ENCODE measurements at regions of chr3 and their contacts with region 1.

Region 1: DNA sequence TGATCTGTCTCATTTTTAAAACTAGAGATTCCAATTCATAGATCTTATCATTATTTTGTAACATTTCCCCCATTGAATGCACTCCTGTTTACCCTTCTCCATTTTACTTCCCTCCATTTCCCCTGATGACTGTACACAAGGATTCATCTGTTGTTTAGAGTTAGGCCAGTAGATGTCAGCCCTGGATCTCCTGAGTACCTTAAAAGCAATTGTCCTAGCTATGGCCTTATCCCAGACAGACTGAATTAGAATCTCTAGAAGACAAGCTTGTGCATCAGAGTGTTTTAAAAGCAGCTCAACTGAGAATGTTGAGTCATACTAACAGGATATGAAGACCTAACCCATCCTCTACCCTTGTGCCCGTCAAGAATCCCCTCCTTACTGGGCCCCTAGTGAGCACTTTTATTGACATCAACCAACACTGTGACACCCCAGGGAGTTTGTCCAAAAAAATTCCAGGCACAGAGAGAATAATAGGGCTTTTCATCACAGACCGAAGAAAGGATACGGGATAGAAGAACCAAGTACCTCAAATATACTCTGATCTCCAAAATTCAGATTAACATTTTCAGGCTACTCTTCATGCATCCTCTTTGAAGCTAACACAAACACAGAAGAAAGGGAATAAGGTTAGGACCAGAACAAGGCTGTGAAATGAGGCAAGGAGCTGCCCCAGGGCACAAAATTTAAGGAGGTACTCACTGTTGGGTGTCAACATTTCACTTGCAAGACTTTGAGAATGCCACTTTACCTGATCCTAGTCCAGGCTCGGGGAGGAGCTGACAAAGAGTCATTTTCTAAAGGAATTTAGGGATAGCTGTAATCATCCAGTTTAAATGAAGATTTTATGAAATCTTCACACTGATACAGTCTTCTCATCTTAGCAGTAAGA is 17.1 kb downstream of the ZBED2 start:
- DNase-seq: peak; percentile 70
- H3K4me3 ChIP-seq: no peak overlapping the region
- H3K27ac ChIP-seq: no peak overlapping the region
- H3K27me3 ChIP-seq: no peaks in the 10 kb centered on the region
- CTCF ChIP-seq: peak; percentile 80

Region 2: DNA sequence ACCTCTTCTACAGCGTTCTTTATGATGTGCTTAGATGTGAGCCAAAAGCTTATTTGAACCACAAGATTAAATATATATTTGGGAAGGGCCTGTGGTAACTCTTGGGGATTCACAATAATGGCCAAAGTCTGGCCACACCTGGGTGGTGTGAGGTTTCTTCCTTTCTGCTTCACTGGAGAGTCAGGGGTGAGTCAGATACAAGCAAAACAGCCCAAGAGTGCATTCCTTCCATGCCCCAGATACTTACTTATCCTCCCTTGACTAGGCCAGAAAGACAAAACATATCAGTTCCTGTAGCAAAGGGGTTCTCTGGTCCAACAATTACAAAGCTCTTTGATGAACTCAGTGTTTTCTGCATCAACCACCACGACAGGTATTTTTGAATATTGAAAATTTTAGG is 16.2 kb after region 1 on chr3:
- CTCF ChIA-PET with region 1: interaction called, 20 read pairs
- POLR2A ChIA-PET with region 1: no interaction called
- DNase-seq: peak; percentile 72
- H3K4me3 ChIP-seq: no peak overlapping the region
- H3K27ac ChIP-seq: peak overlapping the region; percentile 65
- H3K27me3 ChIP-seq: no peaks in the 10 kb centered on the region
- CTCF ChIP-seq: no peak

Region 3: DNA sequence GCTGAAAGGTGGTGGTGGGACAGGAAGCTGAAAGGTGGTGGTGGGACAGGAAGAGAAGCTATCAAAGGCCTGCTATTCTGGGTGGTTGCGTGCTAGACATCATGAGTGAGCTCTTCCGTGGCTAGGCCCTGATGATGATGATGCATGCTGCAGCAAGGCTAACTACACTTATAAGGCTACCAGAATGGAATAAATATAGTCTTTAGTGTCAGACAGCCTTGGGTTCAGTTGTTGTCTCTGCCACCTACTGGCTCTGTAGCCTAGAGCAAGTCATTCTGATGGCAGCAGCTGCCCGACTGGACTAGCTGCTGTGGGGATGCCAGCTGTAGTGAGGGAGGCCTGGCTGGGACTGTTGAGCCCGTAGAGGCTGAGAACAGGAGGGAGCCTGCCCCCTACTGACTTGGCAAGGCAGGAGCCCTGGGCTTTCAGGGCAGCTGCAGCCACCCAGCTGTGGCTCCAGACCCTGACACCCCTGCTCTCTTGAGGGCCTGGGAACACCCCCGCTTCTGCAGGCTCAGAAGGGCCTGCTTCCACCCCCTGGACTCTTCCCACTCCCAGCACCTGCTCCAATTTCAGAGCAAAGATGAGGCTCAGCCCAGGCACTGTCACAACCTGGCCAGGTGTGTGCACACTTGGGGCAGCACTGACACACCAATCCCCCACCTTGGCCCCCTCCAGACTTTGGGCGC is 38.5 kb after region 1 on chr3:
- CTCF ChIA-PET with region 1: interaction called, 16 read pairs
- POLR2A ChIA-PET with region 1: no interaction called
- DNase-seq: no peak
- H3K4me3 ChIP-seq: no peak overlapping the region
- H3K27ac ChIP-seq: no peak overlapping the region
- H3K27me3 ChIP-seq: no peaks in the 10 kb centered on the region
- CTCF ChIP-seq: no peak

Region 4: GRCh38 chr3:111668912-111669488 is 91.0 kb after region 1 on chr3:
- CTCF ChIA-PET with region 1: interaction called, 34 read pairs
- POLR2A ChIA-PET with region 1: no interaction called
- DNase-seq: peak; percentile 37
- H3K4me3 ChIP-seq: no peak overlapping the region
- H3K27ac ChIP-seq: no peak overlapping the region
- H3K27me3 ChIP-seq: no peaks in the 10 kb centered on the region
- CTCF ChIP-seq: peak; percentile 76

Region 5: DNA sequence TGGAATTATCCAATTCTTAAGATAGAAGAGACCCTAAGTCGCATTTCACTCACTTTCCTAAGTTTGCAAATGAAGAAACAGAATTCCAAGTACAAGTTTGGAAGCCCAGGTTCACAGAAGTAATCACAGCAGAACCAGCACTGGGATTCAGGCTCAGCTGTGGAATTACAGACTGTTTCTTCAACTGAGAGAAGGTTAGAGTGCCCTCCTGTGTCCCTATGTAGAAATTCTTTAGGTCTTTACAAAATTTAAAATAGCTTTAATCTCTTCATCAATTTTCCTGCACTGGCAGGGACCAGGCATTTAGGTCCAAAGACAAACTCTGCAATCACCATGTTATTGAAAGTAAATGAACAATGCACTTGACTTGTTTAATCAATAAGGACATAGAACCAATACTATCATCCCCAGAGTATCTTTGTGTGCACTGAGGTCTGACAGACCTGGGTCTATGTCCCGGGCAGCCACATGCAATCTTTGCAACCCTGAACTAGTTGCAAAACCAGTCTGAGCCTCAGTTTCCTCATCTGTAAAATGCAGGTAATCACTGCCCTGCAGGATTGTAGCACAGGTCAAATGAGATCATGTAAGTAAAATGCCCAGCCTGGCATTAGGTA is 113.4 kb after region 1 on chr3:
- CTCF ChIA-PET with region 1: interaction called, 182 read pairs
- POLR2A ChIA-PET with region 1: no interaction called
- DNase-seq: no peak
- H3K4me3 ChIP-seq: no peak overlapping the region
- H3K27ac ChIP-seq: no peak overlapping the region
- H3K27me3 ChIP-seq: peaks cover 2% of the 10 kb centered on the region
- CTCF ChIP-seq: peak; percentile 61

Measured in AG04450 (cell line).